Activated CD4-positive, alpha-beta T cell treated with anti-CD3 and anti-CD28 coated beads for 36 hours (primary cell): ENCODE measurements at regions of chr4 and their contacts with region 1.

Region 1: DNA sequence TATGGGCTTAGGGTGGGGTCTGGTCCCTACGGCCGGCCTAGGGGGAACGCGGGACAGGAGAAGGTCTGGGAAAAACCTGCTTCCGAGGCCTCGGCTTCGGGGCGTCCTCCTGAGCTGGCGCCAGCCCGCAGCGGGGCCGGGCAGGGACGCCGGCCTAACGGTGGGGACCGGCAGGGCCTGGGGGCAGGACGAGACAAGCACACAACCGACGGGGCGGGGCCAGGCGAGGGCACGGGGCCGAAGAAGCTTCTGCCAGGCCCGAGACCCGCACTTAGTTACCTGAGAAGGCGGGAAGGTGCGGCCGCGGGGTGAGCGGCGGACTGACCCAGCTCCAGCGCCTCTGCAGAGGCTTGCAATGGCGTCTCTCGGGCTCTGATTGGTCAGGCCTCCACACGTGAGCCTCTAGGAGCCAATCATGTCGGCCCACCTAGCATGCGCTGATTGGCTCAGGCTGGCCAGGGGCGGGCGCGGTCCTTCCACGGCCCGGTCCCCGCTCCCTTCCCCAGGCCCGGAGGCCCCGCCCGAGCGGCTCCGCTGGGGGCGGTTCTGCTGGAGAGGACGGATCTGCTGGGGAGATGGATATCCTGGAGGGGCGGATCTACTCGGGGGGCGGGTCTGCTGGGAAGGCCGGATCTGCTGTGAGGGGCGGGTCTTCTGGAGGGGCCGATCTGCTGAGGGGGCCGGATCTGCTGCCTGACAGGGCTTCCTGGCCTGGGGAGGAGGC is 44.3 kb downstream of the CPLX1 start:
- DNase-seq: peak; percentile 99
- ATAC-seq: peak; percentile 96
- H3K4me3 Mint-ChIP-seq: peak overlapping the region; percentile 82
- H3K27ac Mint-ChIP-seq: peak overlapping the region; percentile 93
- H3K4me1 Mint-ChIP-seq: peaks cover 50% of the 10 kb centered on the region
- H3K27me3 Mint-ChIP-seq: peaks cover 15% of the 10 kb centered on the region

Region 2: DNA sequence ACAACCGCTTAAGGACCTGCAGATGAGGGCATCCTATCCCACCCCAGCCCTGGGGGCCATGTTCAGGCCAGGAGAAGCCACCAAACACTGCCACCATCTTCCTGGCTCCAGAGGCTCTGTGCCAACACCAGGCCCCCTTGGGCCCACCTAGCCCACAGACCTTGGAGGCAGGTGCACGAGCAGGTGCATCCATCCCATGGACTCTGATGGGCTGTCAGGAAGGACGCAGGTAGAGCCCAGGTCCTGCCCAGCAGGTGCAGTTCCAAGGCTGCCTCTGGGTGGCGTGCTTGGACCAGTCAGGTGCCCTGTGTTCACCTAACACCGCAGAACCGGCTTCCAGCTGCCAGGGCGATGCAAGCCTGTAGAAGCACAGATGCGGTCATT is 179.1 kb before region 1 on chr4:
- CTCF ChIA-PET with region 1: no interaction called
- POLR2A ChIA-PET with region 1: no interaction called
- intact Hi-C with region 1: loop called in 1 of 2 experiments (anchors 10 kb)
- DNase-seq: peak; percentile 90
- ATAC-seq: peak; percentile 69
- H3K4me3 Mint-ChIP-seq: no peak overlapping the region
- H3K27ac Mint-ChIP-seq: no peak overlapping the region
- H3K4me1 Mint-ChIP-seq: peaks cover 19% of the 10 kb centered on the region
- H3K27me3 Mint-ChIP-seq: peaks cover 11% of the 10 kb centered on the region

Region 3: GRCh38 chr4:825238-825835 is 43.7 kb after region 1 on chr4:
- CTCF ChIA-PET with region 1: no interaction called
- POLR2A ChIA-PET with region 1: interaction called, 3 read pairs
- intact Hi-C with region 1: loop called in 1 of 2 experiments (anchors 2 kb)
- DNase-seq: peak; percentile 50
- ATAC-seq: peak; percentile 37
- H3K4me3 Mint-ChIP-seq: no peak overlapping the region
- H3K27ac Mint-ChIP-seq: no peak overlapping the region
- H3K4me1 Mint-ChIP-seq: no peaks in the 10 kb centered on the region
- H3K27me3 Mint-ChIP-seq: peaks cover 35% of the 10 kb centered on the region

Region 4: DNA sequence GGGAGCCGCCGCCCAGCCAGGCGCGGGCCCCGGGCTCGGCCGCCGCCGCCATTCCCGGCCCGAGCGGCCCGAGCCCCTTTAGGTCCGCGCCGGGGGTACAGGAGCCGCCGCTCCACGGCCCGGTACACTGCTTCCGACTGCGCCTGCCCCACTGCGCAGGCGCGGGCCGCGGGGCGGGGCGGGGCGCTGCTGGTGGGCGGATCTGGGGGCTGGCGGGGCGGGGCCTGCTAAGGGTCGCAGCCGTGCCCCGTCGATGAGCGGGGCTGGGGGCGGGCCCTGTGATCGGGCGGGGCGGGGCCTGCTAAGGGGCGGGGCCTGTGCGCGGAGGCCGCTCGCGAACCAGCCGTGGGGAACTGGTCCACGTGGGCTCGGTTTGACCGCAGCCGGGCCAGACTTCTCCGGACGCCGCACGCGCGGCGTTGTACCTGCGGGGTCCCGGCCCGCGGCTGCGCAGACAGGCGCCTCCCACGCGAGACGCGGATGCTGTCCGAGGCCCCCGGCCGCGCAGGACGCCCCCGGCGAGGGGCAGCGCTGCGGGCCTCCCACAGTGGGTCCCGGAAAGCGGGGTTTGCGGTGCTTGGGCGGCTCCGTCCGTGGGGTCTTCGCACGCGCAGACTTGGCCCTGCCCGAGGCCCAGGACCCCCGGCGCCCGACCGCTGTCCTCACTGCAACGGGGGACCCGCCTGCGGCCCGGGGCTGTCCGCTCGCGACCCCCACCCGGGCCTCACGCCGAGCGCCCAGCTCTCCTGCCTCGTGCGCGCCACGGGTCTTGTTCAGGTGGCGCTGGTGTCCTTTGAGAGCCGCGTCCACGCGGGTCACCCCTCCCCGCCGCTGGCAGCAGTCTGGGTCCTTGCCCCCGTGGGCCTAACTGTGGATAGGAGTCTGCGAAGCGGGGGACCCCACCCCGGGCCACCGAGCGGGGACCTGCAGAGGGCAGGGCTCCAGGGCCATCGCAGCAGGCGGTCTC is 192.1 kb after region 1 on chr4 and contains the start of gene DGKQ:
- CTCF ChIA-PET with region 1: no interaction called
- POLR2A ChIA-PET with region 1: no interaction called
- intact Hi-C with region 1: loop called in 1 of 2 experiments (anchors 1 kb)
- DNase-seq: peak; percentile 93
- ATAC-seq: peak; percentile 96
- H3K4me3 Mint-ChIP-seq: peak within 1 kb of the TSS; percentile 58
- H3K27ac Mint-ChIP-seq: no peak within 1 kb of the TSS
- H3K4me1 Mint-ChIP-seq: peaks cover 6% of the 10 kb centered on the region
- H3K27me3 Mint-ChIP-seq: no peaks in the 10 kb centered on the region
- total RNA-seq, gene DGKQ: 9.3 to 11.3 TPM

Region 5: DNA sequence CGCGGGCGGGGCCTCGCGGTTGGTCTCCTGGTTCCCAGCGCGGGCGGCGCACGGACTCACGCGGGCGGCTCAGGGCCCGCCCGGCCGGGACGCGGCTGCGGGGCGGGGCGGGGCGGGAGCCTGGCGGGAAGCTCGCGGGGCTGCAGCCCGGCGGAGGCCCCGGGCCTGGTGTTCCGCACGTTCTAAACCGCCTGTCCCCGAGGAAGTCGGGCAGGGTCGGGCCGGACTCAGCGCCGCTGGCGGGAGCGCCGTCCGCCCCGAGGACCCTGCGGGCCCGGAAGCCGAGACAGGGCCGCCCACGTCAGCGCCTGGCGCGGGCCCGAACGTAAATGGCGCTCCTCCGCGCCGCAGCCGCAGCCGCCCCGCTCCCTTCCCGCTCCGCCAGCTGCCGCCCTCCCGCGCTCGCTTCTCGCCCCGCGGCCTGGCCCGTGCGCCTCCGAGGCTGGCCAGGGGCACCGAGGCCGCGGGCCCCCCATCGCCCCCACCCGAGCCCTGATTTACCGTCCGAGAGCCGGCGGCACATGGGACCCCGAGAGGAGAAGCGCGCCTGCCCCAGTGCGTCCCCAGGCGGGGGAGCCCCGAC is 467.6 kb after region 1 on chr4:
- CTCF ChIA-PET with region 1: no interaction called
- POLR2A ChIA-PET with region 1: no interaction called
- intact Hi-C with region 1: loop called in 1 of 2 experiments (anchors 5 kb)
- DNase-seq: peak; percentile 90
- ATAC-seq: peak; percentile 63
- H3K4me3 Mint-ChIP-seq: peak overlapping the region; percentile 80
- H3K27ac Mint-ChIP-seq: peak overlapping the region; percentile 94
- H3K4me1 Mint-ChIP-seq: peaks cover 74% of the 10 kb centered on the region
- H3K27me3 Mint-ChIP-seq: no peaks in the 10 kb centered on the region

Region 6: DNA sequence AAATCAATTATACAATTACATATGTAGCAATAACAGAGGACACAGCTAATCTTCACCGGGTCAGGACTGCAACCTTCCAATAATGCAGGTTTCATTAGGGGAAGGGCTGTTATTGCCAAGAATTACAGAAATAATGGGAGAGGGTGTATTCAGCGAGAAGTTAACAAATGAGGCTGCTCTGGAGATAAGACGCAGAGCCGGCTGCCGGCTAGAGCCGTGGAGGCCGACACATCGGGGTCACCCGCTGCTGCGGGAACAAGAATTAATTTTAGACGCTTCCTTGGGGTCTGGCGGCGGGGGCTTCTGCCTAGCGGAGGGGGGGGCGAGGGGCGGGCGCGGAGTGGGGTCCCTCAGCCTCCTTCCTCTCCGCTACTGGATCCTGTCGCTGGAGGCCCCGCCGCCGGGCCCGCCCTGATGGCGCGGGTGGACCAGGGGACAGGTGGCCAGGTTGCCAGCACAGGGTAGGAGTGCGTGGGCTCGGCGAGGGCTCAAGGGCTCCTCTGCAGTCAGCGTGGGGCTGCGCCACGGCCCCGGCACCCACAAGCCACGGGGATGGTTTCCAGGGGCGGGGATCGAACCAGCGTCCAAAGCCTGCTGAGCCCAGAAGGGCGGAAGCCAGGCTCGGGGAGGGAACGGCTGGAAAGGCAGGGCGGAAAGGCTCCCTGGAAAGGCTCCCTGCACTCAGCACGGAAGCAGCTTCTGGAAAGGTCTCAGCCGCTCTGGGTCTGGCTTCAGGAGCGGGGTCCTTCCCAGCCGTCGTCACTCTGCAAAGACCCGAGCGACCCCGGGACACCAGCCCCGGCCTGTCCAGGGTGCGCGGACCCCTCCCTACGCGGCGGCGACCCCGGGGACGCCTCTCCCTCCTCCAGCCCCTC is 738.4 kb after region 1 on chr4:
- CTCF ChIA-PET with region 1: no interaction called
- POLR2A ChIA-PET with region 1: no interaction called
- intact Hi-C with region 1: no loop called
- DNase-seq: no peak
- ATAC-seq: no peak
- H3K4me3 Mint-ChIP-seq: no peak overlapping the region
- H3K27ac Mint-ChIP-seq: no peak overlapping the region
- H3K4me1 Mint-ChIP-seq: peaks cover 6% of the 10 kb centered on the region
- H3K27me3 Mint-ChIP-seq: peaks cover 26% of the 10 kb centered on the region

Region 7: GRCh38 chr4:1721004-1721665 is 939.5 kb after region 1 on chr4 and contains the starts of genes TACC3 and TMEM129:
- CTCF ChIA-PET with region 1: no interaction called
- POLR2A ChIA-PET with region 1: no interaction called
- intact Hi-C with region 1: loop called in 1 of 2 experiments (anchors 5 kb)
- DNase-seq: peak; percentile 96
- ATAC-seq: peak; percentile 81
- H3K4me3 Mint-ChIP-seq: peak within 1 kb of the TSS; percentile 96
- H3K27ac Mint-ChIP-seq: peak within 1 kb of the TSS; percentile 99
- H3K4me1 Mint-ChIP-seq: peaks cover 52% of the 10 kb centered on the region
- H3K27me3 Mint-ChIP-seq: no peaks in the 10 kb centered on the region
- total RNA-seq, gene TACC3: 197 to 206 TPM
- total RNA-seq, gene TMEM129: 13.7 to 14.6 TPM